Natural killer cell (primary cell): ENCODE measurements at regions of chr22 and their contacts with region 1.

Region 1: GRCh38 chr22:32103658-32104315 is 55.3 kb downstream of the C22orf42 start:
- DNase-seq: peak in 1 of 2 donors; percentile 50
- ATAC-seq: no peak
- H3K4me3 ChIP-seq: no peak overlapping the region
- H3K4me3 Mint-ChIP-seq: no peak overlapping the region
- H3K27ac ChIP-seq: no peak overlapping the region
- H3K27ac Mint-ChIP-seq: no peak overlapping the region
- H3K4me1 ChIP-seq: no peaks in the 10 kb centered on the region
- H3K4me1 Mint-ChIP-seq: no peaks in the 10 kb centered on the region
- H3K27me3 ChIP-seq: no peaks in the 10 kb centered on the region
- H3K27me3 Mint-ChIP-seq: peaks cover 10 to 35% of the 10 kb centered on the region in 2 donors
- CTCF ChIP-seq: peak; percentile 65

Region 2: GRCh38 chr22:32088084-32088483 is 15.7 kb before region 1 on chr22:
- intact Hi-C with region 1: no loop called
- DNase-seq: no peak
- ATAC-seq: no peak
- H3K4me3 ChIP-seq: no peak overlapping the region
- H3K4me3 Mint-ChIP-seq: no peak overlapping the region
- H3K27ac ChIP-seq: no peak overlapping the region
- H3K27ac Mint-ChIP-seq: no peak overlapping the region
- H3K4me1 ChIP-seq: no peaks in the 10 kb centered on the region
- H3K4me1 Mint-ChIP-seq: no peaks in the 10 kb centered on the region
- H3K27me3 ChIP-seq: peaks cover 3% of the 10 kb centered on the region
- H3K27me3 Mint-ChIP-seq: peaks cover 12 to 41% of the 10 kb centered on the region in 2 donors
- CTCF ChIP-seq: no peak

Region 3: DNA sequence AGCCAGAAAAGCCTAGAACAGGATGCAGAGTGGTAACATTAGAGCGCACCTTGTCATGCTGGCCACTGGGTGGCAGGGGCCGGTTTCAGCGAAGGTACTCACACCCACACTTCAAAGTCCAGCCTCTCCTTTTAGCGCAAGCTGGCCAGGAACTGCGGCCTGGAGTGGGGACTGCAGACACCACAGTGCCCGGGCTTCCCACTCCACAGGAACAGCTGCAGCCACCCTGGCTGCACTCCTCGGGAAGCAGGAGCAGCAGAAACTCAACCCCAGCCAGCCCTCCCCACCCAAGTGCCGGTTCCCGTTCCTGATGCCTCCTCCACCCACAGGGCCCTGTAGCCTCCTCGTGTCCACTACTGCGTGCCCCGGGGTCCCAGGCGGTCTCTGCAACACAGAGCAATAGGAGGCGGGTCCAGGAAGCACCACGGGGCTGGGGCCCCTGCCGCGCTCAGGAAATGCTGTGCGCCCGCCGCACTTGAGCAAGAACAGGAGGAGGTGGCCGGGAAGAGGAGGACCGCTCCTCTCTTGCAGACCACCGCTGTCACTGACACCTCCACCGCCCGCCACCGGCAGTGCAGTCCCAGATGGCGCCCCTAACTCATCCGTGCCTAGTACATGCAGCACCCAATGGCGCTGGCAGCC is 98.9 kb after region 1 on chr22:
- intact Hi-C with region 1: loop called (anchors 1 kb)
- DNase-seq: peak in 1 of 2 donors; percentile 53
- ATAC-seq: no peak
- H3K4me3 ChIP-seq: no peak overlapping the region
- H3K4me3 Mint-ChIP-seq: peak overlapping the region; percentile 81
- H3K27ac ChIP-seq: no peak overlapping the region
- H3K27ac Mint-ChIP-seq: no peak overlapping the region
- H3K4me1 ChIP-seq: peaks cover 62% of the 10 kb centered on the region
- H3K4me1 Mint-ChIP-seq: peaks cover 14 to 37% of the 10 kb centered on the region in 2 donors
- H3K27me3 ChIP-seq: peaks cover 4% of the 10 kb centered on the region
- H3K27me3 Mint-ChIP-seq: peaks cover 29 to 31% of the 10 kb centered on the region in 2 donors
- CTCF ChIP-seq: peak; percentile 15

Region 4: GRCh38 chr22:32265882-32266767 is 162.3 kb after region 1 on chr22:
- intact Hi-C with region 1: loop called (anchors 1 kb)
- DNase-seq: peak; percentile 39 to 82
- ATAC-seq: peak; percentile 54 to 81 (median 60)
- H3K4me3 ChIP-seq: no peak overlapping the region
- H3K4me3 Mint-ChIP-seq: no peak overlapping the region
- H3K27ac ChIP-seq: no peak overlapping the region
- H3K27ac Mint-ChIP-seq: no peak overlapping the region
- H3K4me1 ChIP-seq: peaks cover 3% of the 10 kb centered on the region
- H3K4me1 Mint-ChIP-seq: peaks cover 6 to 8% of the 10 kb centered on the region in 2 donors
- H3K27me3 ChIP-seq: no peaks in the 10 kb centered on the region
- H3K27me3 Mint-ChIP-seq: peaks cover 0 to 6% of the 10 kb centered on the region in 2 donors
- CTCF ChIP-seq: peak; percentile 87